T-cell (primary cell): ENCODE measurements at regions of chrX and their contacts with region 1.

Region 1: GRCh38 chrX:71111141-71111843 is at the start of gene IL2RG:
- DNase-seq: peak; percentile 35 to 90 (median 79)
- ATAC-seq: peak; percentile 87 to 91 (median 91)
- H3K4me3 ChIP-seq: peak within 1 kb of the TSS; percentile 94
- H3K4me3 Mint-ChIP-seq: peak within 1 kb of the TSS; percentile 95 to 99 (median 97)
- H3K27ac ChIP-seq: peak within 1 kb of the TSS; percentile 99
- H3K27ac Mint-ChIP-seq: peak within 1 kb of the TSS; percentile 97 to 99
- H3K4me1 ChIP-seq: peaks cover 17 to 56% of the 10 kb centered on the region in 2 experiments
- H3K4me1 Mint-ChIP-seq: peaks cover 54 to 68% (median 60%) of the 10 kb centered on the region in 3 donors
- H3K27me3 ChIP-seq: no peaks in the 10 kb centered on the region
- H3K27me3 Mint-ChIP-seq: no peaks in the 10 kb centered on the region
- total RNA-seq, gene IL2RG: 285 to 380 (median 312) TPM

Region 2: DNA sequence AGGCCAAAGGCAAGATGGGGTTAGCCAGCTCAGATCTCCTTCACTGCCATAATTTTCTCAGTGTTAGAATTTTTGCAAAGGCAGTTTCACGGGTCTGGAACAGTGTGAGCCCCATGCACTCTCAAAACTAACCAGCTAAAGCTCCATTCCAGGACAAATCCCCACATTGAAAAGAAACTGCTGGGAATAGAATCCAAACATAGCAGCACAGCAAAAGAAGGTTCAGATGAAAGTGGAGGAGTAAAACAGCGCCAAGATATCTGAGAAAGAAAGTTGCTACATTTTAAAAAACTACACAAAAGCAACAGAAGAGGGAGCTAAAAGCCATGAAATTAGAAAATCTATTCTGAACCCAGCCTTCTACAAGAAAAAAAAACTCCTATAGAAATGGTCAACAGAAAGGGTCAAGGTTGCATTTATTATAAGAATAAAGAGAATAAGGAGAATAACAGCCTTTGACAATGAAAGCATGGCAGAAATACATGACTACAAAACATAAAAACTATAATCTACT is 140.8 kb before region 1 on chrX:
- CTCF ChIA-PET with region 1: no interaction called
- POLR2A ChIA-PET with region 1: no interaction called
- DNase-seq: peak in 1 of 35 experiments; percentile 29
- ATAC-seq: no peak
- H3K4me3 ChIP-seq: no peak overlapping the region
- H3K4me3 Mint-ChIP-seq: peak overlapping the region; percentile 1 to 37 (median 17)
- H3K27ac ChIP-seq: no peak overlapping the region
- H3K27ac Mint-ChIP-seq: no peak overlapping the region
- H3K4me1 ChIP-seq: no peaks in the 10 kb centered on the region
- H3K4me1 Mint-ChIP-seq: peaks cover 2 to 8% (median 6%) of the 10 kb centered on the region in 3 donors
- H3K27me3 ChIP-seq: no peaks in the 10 kb centered on the region
- H3K27me3 Mint-ChIP-seq: peaks cover 0 to 6% of the 10 kb centered on the region in 2 donors

Region 3: GRCh38 chrX:71400710-71401109 is 289.4 kb after region 1 on chrX:
- CTCF ChIA-PET with region 1: no interaction called
- POLR2A ChIA-PET with region 1: interaction called in 1 of 2 experiments, 13 read pairs
- DNase-seq: no peak
- ATAC-seq: no peak
- H3K4me3 ChIP-seq: no peak overlapping the region
- H3K4me3 Mint-ChIP-seq: no peak overlapping the region
- H3K27ac ChIP-seq: no peak overlapping the region
- H3K27ac Mint-ChIP-seq: peak overlapping the region in 1 of 2 donors; percentile 58
- H3K4me1 ChIP-seq: no peaks in the 10 kb centered on the region
- H3K4me1 Mint-ChIP-seq: peaks cover 0 to 2% (median 0%) of the 10 kb centered on the region in 3 donors
- H3K27me3 ChIP-seq: no peaks in the 10 kb centered on the region
- H3K27me3 Mint-ChIP-seq: no peaks in the 10 kb centered on the region